ENCODE measurements at regions of chr9 and their contacts with region 1.

Region 1: GRCh38 chr9:105557771-105558610 is at the start of gene FKTN:
- DNase-seq: peak; percentile 95
- total RNA-seq, gene FKTN: 8.8 TPM

Region 2: GRCh38 chr9:105457560-105458294 is 100.3 kb before region 1 on chr9:
- intact Hi-C with region 1: loop called (anchors 10 kb)
- DNase-seq: no peak

Measured in cardiac septum (tissue), 1 donor.